ENCODE measurements at regions of chr10 and their contacts with region 1.

Region 1: GRCh38 chr10:35635576-35635975 is 6.5 kb downstream of the FZD8 start:
- DNase-seq: peak; percentile 60 to 78
- H3K4me3 ChIP-seq: no peak overlapping the region
- H3K4me3 Mint-ChIP-seq: no peak overlapping the region
- H3K27ac Mint-ChIP-seq: no peak overlapping the region
- H3K4me1 ChIP-seq: no peaks in the 10 kb centered on the region
- H3K4me1 Mint-ChIP-seq: no peaks in the 10 kb centered on the region
- H3K27me3 ChIP-seq: no peaks in the 10 kb centered on the region
- H3K27me3 Mint-ChIP-seq: no peaks in the 10 kb centered on the region
- CTCF ChIP-seq: peak; percentile 94 to 96

Region 2: DNA sequence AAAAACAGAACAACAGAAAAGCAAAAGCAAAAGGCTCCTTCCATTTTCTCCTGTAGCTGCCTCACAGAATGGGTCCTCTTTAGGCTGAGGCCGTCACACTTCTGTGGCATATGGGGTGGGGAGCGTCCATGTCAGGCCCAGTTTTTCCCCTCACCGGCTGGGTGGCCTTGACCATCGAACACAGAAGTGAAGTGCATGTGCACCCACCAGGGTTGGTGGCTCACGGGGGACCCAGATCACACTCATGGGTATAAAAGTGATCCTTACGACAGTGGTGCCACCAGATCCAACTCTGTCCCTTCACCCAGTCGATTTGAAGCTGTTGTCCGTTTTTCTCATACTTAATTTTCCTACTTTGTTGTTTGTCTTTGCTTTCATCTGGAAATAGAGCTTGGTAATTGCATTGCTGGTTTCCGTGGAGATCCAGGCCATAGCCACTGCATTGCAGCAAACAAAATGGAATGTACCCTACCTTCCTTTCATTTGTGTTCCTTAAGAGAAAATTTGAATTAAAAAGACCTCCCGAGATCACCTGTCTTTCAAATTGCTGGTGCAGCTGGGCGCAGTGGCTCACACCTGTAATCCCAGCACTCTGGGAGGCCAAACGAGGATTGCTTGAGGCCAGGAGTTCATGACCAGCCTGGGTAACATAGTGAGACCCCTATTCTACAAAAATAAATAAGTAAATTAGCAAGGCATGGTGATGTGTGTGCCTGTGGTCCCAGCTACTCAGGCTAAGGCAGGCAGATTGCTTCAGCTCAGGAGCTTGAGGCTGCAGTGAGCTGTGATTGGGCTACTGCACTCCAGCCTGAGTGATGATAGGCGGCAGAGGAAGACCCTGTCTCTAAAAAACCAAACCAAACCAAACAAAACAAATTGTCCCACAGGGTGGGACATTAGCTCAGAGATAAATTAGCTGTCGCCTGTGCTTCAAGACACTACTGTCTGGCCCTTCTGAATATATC is 41.2 kb before region 1 on chr10:
- CTCF ChIA-PET with region 1: no interaction called
- POLR2A ChIA-PET with region 1: no interaction called
- intact Hi-C with region 1: no loop called
- DNase-seq: peak in 1 of 2 experiments; percentile 20
- H3K4me3 ChIP-seq: no peak overlapping the region
- H3K4me3 Mint-ChIP-seq: no peak overlapping the region
- H3K27ac Mint-ChIP-seq: no peak overlapping the region
- H3K4me1 ChIP-seq: no peaks in the 10 kb centered on the region
- H3K4me1 Mint-ChIP-seq: no peaks in the 10 kb centered on the region
- H3K27me3 ChIP-seq: no peaks in the 10 kb centered on the region
- H3K27me3 Mint-ChIP-seq: no peaks in the 10 kb centered on the region
- CTCF ChIP-seq: no peak

Region 3: DNA sequence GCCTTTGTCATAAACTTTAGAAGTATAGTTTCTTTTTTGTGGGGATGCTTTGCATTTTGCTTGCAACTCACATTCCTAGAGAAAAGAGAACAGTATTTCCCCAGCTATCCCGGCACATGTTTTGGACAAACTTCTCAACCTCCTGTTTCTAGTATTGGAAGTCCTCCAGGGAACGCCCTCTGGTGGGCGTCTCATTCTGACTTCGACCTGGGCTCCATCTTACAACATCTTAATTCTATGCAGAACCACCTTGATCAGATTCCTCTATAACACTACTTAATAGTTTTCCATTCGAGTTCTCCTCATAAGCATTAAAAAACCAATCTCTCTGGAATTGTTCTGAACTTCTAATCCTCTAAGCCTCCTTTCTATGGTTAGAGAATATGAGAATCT is 146.1 kb after region 1 on chr10:
- CTCF ChIA-PET with region 1: interaction called, 3 read pairs
- POLR2A ChIA-PET with region 1: no interaction called
- intact Hi-C with region 1: loop called (anchors 1 kb)
- DNase-seq: peak; percentile 64 to 76
- H3K4me3 ChIP-seq: no peak overlapping the region
- H3K4me3 Mint-ChIP-seq: no peak overlapping the region
- H3K27ac Mint-ChIP-seq: no peak overlapping the region
- H3K4me1 ChIP-seq: no peaks in the 10 kb centered on the region
- H3K4me1 Mint-ChIP-seq: no peaks in the 10 kb centered on the region
- H3K27me3 ChIP-seq: no peaks in the 10 kb centered on the region
- H3K27me3 Mint-ChIP-seq: no peaks in the 10 kb centered on the region
- CTCF ChIP-seq: peak; percentile 80 to 83

Region 4: GRCh38 chr10:36003031-36003600 is 367.5 kb after region 1 on chr10:
- CTCF ChIA-PET with region 1: no interaction called
- POLR2A ChIA-PET with region 1: no interaction called
- intact Hi-C with region 1: loop called (anchors 5 kb)
- DNase-seq: no peak
- H3K4me3 ChIP-seq: no peak overlapping the region
- H3K4me3 Mint-ChIP-seq: no peak overlapping the region
- H3K27ac Mint-ChIP-seq: no peak overlapping the region
- H3K4me1 ChIP-seq: no peaks in the 10 kb centered on the region
- H3K4me1 Mint-ChIP-seq: no peaks in the 10 kb centered on the region
- H3K27me3 ChIP-seq: no peaks in the 10 kb centered on the region; the same call in 1 of the 2 replicates
- H3K27me3 Mint-ChIP-seq: peaks cover 11% of the 10 kb centered on the region
- CTCF ChIP-seq: no peak

Region 5: DNA sequence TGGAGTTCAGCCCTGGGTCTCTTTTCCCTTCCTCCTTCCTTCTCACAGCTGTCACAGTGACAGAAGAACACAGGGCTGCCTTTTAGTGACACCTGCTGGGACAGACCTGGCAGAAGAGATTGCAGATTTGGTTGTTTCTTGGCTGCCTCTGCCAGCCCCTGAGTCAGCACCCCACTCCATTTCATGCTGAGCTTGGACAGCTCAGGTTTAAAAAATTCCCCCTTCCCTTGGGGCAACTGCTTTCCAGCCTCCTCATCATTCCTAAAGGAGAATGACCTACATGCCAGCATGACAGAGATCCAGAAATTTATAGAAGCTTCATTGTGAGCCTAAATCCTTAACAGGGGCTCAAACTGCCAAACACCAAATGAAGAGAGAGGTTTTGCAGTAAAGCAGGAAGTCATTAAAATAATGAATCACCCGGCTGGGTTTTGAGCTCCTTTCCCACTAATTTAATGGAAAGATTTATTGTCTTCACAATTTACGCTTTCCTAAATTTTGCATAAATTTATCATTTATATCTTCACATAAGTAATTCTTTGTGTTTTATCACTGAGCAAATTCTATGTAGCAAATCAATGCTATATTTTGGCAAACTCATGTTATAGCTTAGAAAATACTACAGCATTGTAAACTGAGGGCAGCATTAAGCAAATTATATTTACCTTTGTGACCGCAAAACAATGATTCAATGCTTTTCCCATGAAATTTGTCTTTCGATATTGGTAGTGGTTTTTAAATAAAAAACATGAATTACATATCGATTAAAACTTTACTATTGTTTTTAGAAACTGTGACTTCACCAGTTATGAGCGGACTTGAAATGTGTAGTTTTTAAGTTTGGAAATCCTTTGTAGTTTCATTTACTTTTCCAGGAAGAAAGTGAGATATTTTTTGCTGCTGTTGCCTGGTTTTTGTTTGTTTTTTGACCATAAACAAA is 1090.3 kb after region 1 on chr10:
- CTCF ChIA-PET with region 1: interaction called, 4 read pairs
- POLR2A ChIA-PET with region 1: no interaction called
- intact Hi-C with region 1: loop called (anchors 1 kb)
- DNase-seq: peak; percentile 50 to 59
- H3K4me3 ChIP-seq: no peak overlapping the region
- H3K4me3 Mint-ChIP-seq: no peak overlapping the region
- H3K27ac Mint-ChIP-seq: no peak overlapping the region
- H3K4me1 ChIP-seq: no peaks in the 10 kb centered on the region
- H3K4me1 Mint-ChIP-seq: no peaks in the 10 kb centered on the region
- H3K27me3 ChIP-seq: no peaks in the 10 kb centered on the region
- H3K27me3 Mint-ChIP-seq: peaks cover 2% of the 10 kb centered on the region
- CTCF ChIP-seq: peak; percentile 46 to 57

Region 6: DNA sequence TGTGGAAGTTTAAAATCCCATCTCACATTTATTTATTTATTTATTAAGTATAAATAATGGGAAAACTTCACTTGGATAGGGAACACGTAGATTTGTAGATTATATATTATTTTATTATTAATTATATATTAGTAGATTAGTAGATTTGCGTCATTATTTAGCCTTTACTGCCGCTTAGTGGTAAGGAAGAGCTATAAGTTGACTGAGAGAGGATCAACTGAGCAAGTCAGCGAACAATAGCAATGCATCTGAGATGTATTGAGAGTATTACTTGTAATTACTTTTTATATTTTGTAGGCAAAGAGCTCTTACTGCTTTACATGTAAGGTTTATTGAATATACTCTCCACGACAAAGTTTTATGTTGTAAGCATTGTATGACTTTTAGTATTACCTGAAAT is 1245.3 kb after region 1 on chr10:
- CTCF ChIA-PET with region 1: interaction called, 9 read pairs
- POLR2A ChIA-PET with region 1: no interaction called
- intact Hi-C with region 1: loop called (anchors 1 kb)
- DNase-seq: no peak
- H3K4me3 ChIP-seq: no peak overlapping the region
- H3K4me3 Mint-ChIP-seq: no peak overlapping the region
- H3K27ac Mint-ChIP-seq: no peak overlapping the region
- H3K4me1 ChIP-seq: no peaks in the 10 kb centered on the region
- H3K4me1 Mint-ChIP-seq: no peaks in the 10 kb centered on the region
- H3K27me3 ChIP-seq: no peaks in the 10 kb centered on the region
- H3K27me3 Mint-ChIP-seq: peaks cover 13% of the 10 kb centered on the region
- CTCF ChIP-seq: peak; percentile 43 to 70